OCI-LY7 (cell line): ENCODE measurements at regions of chr10 and their contacts with region 1.

Region 1: DNA sequence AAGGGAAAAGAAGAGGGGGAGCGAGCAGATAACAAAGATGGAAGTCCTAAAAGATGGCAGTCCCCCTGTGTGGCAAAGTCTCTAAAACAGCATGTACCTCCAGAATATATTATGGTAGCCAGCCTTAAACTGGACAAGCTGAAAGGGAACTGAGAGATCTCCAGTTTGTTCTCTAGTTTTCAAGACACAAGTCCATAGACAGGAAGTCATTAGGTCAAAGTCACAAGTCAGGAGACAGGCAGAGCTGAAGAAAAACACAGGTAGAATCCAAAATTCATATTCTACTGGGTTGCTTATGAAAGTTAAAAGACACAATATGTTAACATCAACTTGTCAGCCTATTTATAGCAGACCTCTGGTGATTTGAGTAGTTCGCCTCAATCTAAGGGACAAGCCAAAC is 38.7 kb downstream of the FAM107B start:
- DNase-seq: peak; percentile 67
- H3K4me3 ChIP-seq: peak overlapping the region; percentile 22
- H3K27ac ChIP-seq: peak overlapping the region; percentile 80
- H3K4me1 ChIP-seq: peaks cover 52% of the 10 kb centered on the region
- CTCF ChIP-seq: no peak

Region 2: DNA sequence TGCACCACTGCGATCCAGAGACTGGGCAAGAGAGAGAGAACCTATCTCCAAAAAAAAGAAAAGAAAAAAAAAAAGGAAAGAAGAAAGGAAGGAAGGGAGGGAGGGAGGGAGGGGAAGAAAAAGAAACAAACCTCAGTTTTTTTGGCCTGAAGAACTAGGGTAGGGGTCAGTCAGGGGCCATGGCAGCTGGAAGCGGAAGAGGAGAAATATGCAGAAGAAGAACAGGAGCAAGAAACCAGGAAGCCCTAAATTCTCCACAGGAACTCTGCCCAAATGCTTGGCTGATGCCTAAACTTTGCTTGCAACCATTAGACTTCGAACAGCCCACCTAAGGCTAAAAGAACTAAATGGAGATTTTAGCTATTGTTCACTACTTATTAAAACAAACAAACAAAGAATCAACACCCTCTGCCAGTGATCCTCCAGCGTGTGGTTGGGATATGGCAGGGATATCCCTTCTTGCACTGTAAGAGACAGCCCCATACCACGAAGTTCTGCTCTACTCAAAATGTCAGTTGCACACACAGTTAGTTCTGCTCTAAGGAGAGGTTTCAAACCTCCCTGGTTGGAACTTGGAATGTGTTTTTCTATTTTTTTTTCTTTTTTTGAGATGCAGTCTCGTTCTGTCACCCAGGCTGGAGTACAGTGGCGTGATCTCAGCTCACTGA is 100.9 kb before region 1 on chr10:
- CTCF ChIA-PET with region 1: no interaction called
- POLR2A ChIA-PET with region 1: no interaction called
- intact Hi-C with region 1: no loop called
- DNase-seq: no peak
- H3K4me3 ChIP-seq: no peak overlapping the region
- H3K27ac ChIP-seq: no peak overlapping the region
- H3K4me1 ChIP-seq: no peaks in the 10 kb centered on the region
- CTCF ChIP-seq: no peak

Region 3: GRCh38 chr10:14723052-14723689 is 12.9 kb before region 1 on chr10:
- CTCF ChIA-PET with region 1: no interaction called
- POLR2A ChIA-PET with region 1: interaction called, 12 read pairs
- intact Hi-C with region 1: no loop called
- DNase-seq: peak; percentile 59
- H3K4me3 ChIP-seq: no peak overlapping the region
- H3K27ac ChIP-seq: peak overlapping the region; percentile 19
- H3K4me1 ChIP-seq: peaks cover 18% of the 10 kb centered on the region
- CTCF ChIP-seq: no peak